ENCODE measurements at regions of chr12 and their contacts with region 1.

Region 1: GRCh38 chr12:54201001-54201794 is 12.4 kb upstream of the SMUG1 start:
- DNase-seq: peak; percentile 53
- H3K4me3 ChIP-seq: no peak overlapping the region
- H3K27ac ChIP-seq: no peak overlapping the region
- H3K4me1 ChIP-seq: no peaks in the 10 kb centered on the region
- H3K27me3 ChIP-seq: peaks cover 69% of the 10 kb centered on the region
- CTCF ChIP-seq: peak; percentile 94

Region 2: DNA sequence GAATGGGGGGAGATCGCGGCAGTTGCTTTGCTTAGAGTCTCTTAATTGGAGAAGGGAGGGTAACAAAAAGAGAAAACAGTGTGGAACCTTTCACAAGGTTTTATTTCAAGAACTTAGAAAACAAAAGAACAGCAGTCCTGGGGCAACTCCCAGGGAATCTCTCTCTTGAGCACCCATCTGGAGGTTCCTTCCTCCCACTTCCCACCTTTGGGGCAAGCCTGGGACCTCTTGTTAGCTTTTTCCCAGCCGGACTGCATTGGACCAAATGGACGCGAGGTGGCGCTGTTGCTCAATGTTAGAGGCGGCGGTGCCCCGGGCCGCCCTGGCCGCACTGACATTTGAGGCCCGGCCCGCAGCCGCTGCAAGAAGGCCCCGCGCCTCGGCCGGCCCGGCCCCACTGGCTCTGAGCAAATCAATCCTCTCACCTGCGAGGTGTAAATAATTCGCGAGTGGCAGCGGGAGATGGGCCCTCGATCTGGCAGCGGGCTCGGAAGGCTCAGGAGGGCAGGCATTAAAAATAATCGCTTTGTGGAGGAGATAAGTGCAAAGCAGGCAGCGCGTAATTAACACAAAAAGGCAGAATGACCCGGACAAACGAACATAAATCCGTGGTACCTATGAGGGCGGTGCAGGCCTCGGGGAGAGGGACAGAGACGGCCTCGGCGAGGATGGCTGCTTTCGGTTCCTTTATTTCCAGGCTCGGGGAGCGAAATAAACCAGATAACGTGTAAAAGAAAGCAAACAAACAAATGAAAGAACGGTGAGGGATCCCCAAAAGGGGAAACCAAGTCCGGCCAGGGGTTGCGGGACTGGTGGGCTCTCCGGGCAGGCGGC is 195.1 kb before region 1 on chr12:
- intact Hi-C with region 1: loop called (anchors 2 kb)
- DNase-seq: peak; percentile 87
- H3K4me3 ChIP-seq: peak overlapping the region; percentile 14
- H3K27ac ChIP-seq: no peak overlapping the region
- H3K4me1 ChIP-seq: peaks cover 7% of the 10 kb centered on the region
- H3K27me3 ChIP-seq: peaks cover 94% of the 10 kb centered on the region
- CTCF ChIP-seq: peak; percentile 88

Region 3: GRCh38 chr12:54032627-54033100 is 168.5 kb before region 1 on chr12 and contains the start of gene HOXC5:
- intact Hi-C with region 1: loop called (anchors 5 kb)
- DNase-seq: peak; percentile 65
- H3K4me3 ChIP-seq: peak within 1 kb of the TSS; percentile 14
- H3K27ac ChIP-seq: no peak within 1 kb of the TSS
- H3K4me1 ChIP-seq: no peaks in the 10 kb centered on the region
- H3K27me3 ChIP-seq: peaks cover 97% of the 10 kb centered on the region
- CTCF ChIP-seq: peak; percentile 88
- total RNA-seq, gene HOXC5: not detected

Region 4: GRCh38 chr12:54159140-54159539 is 42.1 kb before region 1 on chr12:
- intact Hi-C with region 1: no loop called
- DNase-seq: peak; percentile 27
- H3K4me3 ChIP-seq: no peak overlapping the region
- H3K27ac ChIP-seq: no peak overlapping the region
- H3K4me1 ChIP-seq: no peaks in the 10 kb centered on the region
- H3K27me3 ChIP-seq: no peaks in the 10 kb centered on the region
- CTCF ChIP-seq: no peak

Region 5: GRCh38 chr12:54337280-54337842 is 136.2 kb after region 1 on chr12:
- intact Hi-C with region 1: no loop called
- DNase-seq: no peak
- H3K4me3 ChIP-seq: no peak overlapping the region
- H3K27ac ChIP-seq: peak overlapping the region; percentile 13
- H3K4me1 ChIP-seq: no peaks in the 10 kb centered on the region
- H3K27me3 ChIP-seq: no peaks in the 10 kb centered on the region
- CTCF ChIP-seq: no peak